ENCODE measurements at regions of chr2 and their contacts with region 1.

Region 1: GRCh38 chr2:133324147-133324561 is 244.1 kb downstream of the NCKAP5 start:
- DNase-seq: peak; percentile 86
- ATAC-seq: peak; percentile 94
- H3K4me3 ChIP-seq: no peak overlapping the region
- H3K27ac ChIP-seq: peak overlapping the region; percentile 95
- H3K4me1 ChIP-seq: peaks cover 48% of the 10 kb centered on the region
- H3K27me3 ChIP-seq: no peaks in the 10 kb centered on the region
- CTCF ChIP-seq: no peak

Region 2: GRCh38 chr2:133200684-133201421 is 123.3 kb before region 1 on chr2:
- CTCF ChIA-PET with region 1: no interaction called
- POLR2A ChIA-PET with region 1: no interaction called
- intact Hi-C with region 1: loop called (anchors 5 kb)
- DNase-seq: peak; percentile 91
- ATAC-seq: peak; percentile 99
- H3K4me3 ChIP-seq: no peak overlapping the region
- H3K27ac ChIP-seq: peak overlapping the region; percentile 77
- H3K4me1 ChIP-seq: peaks cover 35% of the 10 kb centered on the region
- H3K27me3 ChIP-seq: no peaks in the 10 kb centered on the region
- CTCF ChIP-seq: no peak

Region 3: GRCh38 chr2:133286326-133286922 is 37.7 kb before region 1 on chr2:
- CTCF ChIA-PET with region 1: no interaction called
- POLR2A ChIA-PET with region 1: no interaction called
- intact Hi-C with region 1: loop called (anchors 5 kb)
- DNase-seq: peak; percentile 58
- ATAC-seq: peak; percentile 37
- H3K4me3 ChIP-seq: no peak overlapping the region
- H3K27ac ChIP-seq: peak overlapping the region; percentile 49
- H3K4me1 ChIP-seq: peaks cover 22% of the 10 kb centered on the region
- H3K27me3 ChIP-seq: no peaks in the 10 kb centered on the region
- CTCF ChIP-seq: no peak; the same call in 1 of the 2 replicates

Region 4: DNA sequence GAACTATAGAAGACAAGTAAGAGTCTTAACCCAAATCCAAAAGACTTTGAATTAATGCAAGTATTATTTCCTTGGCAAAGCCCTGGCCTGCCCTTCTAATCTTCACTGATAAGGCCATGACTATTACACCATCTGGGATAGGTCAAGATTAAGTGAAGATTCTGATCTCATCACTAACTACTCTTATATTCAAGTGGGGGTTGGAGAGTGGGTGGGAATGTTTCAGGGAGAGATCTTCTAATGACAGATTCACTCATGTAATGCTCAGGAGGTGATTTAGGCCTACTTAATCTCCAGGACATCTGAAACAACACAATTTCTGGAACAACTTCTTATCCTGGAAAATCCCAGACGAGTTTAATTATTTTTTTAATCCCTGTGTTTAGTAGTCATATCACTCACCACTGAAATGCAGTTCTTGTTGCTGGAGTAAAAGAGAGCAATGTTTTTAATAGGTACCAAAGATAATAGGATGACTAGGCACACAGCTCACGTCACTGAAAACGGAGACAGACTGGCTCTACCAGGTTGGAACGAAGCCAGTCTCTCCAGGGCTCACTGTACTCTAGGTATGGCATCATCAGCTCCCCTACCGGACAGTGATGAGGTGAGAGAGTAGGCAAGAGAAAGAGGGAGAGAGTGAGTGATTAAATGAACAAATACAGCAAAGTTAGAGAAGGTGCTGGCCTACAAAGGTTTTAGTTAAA is 111.0 kb after region 1 on chr2:
- CTCF ChIA-PET with region 1: no interaction called
- POLR2A ChIA-PET with region 1: no interaction called
- intact Hi-C with region 1: loop called (anchors 2 kb)
- DNase-seq: peak; percentile 65
- ATAC-seq: no peak
- H3K4me3 ChIP-seq: no peak overlapping the region
- H3K27ac ChIP-seq: no peak overlapping the region
- H3K4me1 ChIP-seq: peaks cover 16% of the 10 kb centered on the region
- H3K27me3 ChIP-seq: no peaks in the 10 kb centered on the region
- CTCF ChIP-seq: peak; percentile 24; the same call in 1 of the 2 replicates

Region 5: GRCh38 chr2:133674433-133675331 is 350.5 kb after region 1 on chr2:
- CTCF ChIA-PET with region 1: no interaction called
- POLR2A ChIA-PET with region 1: no interaction called
- intact Hi-C with region 1: loop called (anchors 5 kb)
- DNase-seq: peak; percentile 68
- ATAC-seq: peak; percentile 73
- H3K4me3 ChIP-seq: peak overlapping the region; percentile 54
- H3K27ac ChIP-seq: no peak overlapping the region
- H3K4me1 ChIP-seq: peaks cover 15% of the 10 kb centered on the region
- H3K27me3 ChIP-seq: no peaks in the 10 kb centered on the region
- CTCF ChIP-seq: no peak